GM12878 (cell line): ENCODE measurements at regions of chr3 and their contacts with region 1.

Region 1: DNA sequence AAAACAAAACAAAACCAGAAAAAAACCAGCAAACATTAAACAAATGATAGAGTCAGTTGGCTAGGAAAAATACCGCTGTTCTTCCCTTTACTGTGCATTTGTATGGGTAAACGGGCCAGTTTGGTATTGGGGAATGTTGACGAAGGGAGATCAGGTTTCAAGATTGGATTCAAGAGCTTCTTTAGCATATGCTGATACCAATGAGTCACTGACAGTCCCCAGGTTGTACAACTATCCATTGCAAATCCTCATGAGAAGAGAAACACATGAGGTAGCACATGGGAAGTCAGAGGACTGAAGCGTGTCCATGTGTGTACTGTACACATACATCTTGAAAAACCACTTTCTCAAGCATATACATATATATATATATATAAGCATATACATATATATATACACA is 25.6 kb downstream of the TIGIT start:
- DNase-seq: no peak
- ATAC-seq: no peak
- H3K4me3 ChIP-seq: no peak overlapping the region
- H3K27ac ChIP-seq: no peak overlapping the region
- H3K4me1 ChIP-seq: peaks cover 10% of the 10 kb centered on the region
- H3K27me3 ChIP-seq: no peaks in the 10 kb centered on the region
- CTCF ChIP-seq: no peak
- EP300 ChIP-seq: no peak
- POLR2A ChIP-seq: no peak
- RAD21 ChIP-seq: no peak

Region 2: GRCh38 chr3:114213627-114214541 is 105.6 kb before region 1 on chr3:
- CTCF ChIA-PET with region 1: no interaction called
- POLR2A ChIA-PET with region 1: no interaction called
- RAD21 ChIA-PET with region 1: interaction called, 29 read pairs
- SMC1A ChIA-PET with region 1: interaction called, 3 read pairs
- in situ Hi-C with region 1: no loop called
- intact Hi-C with region 1: no loop called
- DNase-seq: peak; percentile 84
- ATAC-seq: peak; percentile 91
- H3K4me3 ChIP-seq: peak overlapping the region; percentile 63
- H3K27ac ChIP-seq: peak overlapping the region; percentile 88
- H3K4me1 ChIP-seq: peaks cover 20% of the 10 kb centered on the region
- H3K27me3 ChIP-seq: no peaks in the 10 kb centered on the region; a peak in 1 of 4 replicates
- CTCF ChIP-seq: no peak
- EP300 ChIP-seq: peak; percentile 86 to 91
- POLR2A ChIP-seq: peak; percentile 74
- RAD21 ChIP-seq: no peak

Region 3: GRCh38 chr3:114299421-114299820 is 20.0 kb before region 1 on chr3:
- CTCF ChIA-PET with region 1: interaction called, 45 read pairs
- POLR2A ChIA-PET with region 1: interaction called, 3 read pairs
- RAD21 ChIA-PET with region 1: interaction called, 80 read pairs
- SMC1A ChIA-PET with region 1: interaction called, 50 read pairs
- in situ Hi-C with region 1: no loop called
- intact Hi-C with region 1: no loop called
- DNase-seq: no peak
- ATAC-seq: peak; percentile 67
- H3K4me3 ChIP-seq: no peak overlapping the region
- H3K27ac ChIP-seq: no peak overlapping the region
- H3K4me1 ChIP-seq: peaks cover 16% of the 10 kb centered on the region
- H3K27me3 ChIP-seq: no peaks in the 10 kb centered on the region
- CTCF ChIP-seq: peak; percentile 19 to 33 (median 22); a peak in 2 of 6 replicates
- EP300 ChIP-seq: no peak
- POLR2A ChIP-seq: no peak
- RAD21 ChIP-seq: no peak

Region 4: DNA sequence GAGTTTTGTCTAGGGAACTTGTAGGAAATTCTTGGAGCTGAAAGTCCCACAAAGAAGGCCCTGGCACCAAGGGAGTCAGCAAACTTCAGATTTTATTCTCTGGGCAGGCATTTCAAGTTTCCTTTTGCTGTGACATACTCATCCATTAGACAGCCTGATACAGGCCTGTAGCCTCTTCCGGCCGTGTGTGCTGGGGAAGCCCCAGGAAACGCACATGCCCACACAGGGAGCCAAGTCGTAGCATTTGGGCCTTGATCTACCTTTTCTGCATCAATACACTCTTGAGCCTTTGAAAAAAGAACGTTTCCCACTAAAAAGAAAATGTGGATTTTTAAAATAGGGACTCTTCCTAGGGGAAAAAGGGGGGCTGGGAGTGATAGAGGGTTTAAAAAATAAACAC is 10.6 kb before region 1 on chr3:
- CTCF ChIA-PET with region 1: interaction called, 35 read pairs
- POLR2A ChIA-PET with region 1: interaction called, 26 read pairs
- RAD21 ChIA-PET with region 1: interaction called, 34 read pairs
- SMC1A ChIA-PET with region 1: interaction called, 57 read pairs
- in situ Hi-C with region 1: no loop called
- intact Hi-C with region 1: no loop called
- DNase-seq: no peak
- ATAC-seq: peak; percentile 97
- H3K4me3 ChIP-seq: no peak overlapping the region
- H3K27ac ChIP-seq: peak overlapping the region; percentile 57
- H3K4me1 ChIP-seq: peaks cover 32% of the 10 kb centered on the region
- H3K27me3 ChIP-seq: no peaks in the 10 kb centered on the region
- CTCF ChIP-seq: no peak
- EP300 ChIP-seq: no peak
- POLR2A ChIP-seq: 0 out of 2 replicates have a peak, but pooled peaks have one; percentile 44
- RAD21 ChIP-seq: no peak

Region 5: DNA sequence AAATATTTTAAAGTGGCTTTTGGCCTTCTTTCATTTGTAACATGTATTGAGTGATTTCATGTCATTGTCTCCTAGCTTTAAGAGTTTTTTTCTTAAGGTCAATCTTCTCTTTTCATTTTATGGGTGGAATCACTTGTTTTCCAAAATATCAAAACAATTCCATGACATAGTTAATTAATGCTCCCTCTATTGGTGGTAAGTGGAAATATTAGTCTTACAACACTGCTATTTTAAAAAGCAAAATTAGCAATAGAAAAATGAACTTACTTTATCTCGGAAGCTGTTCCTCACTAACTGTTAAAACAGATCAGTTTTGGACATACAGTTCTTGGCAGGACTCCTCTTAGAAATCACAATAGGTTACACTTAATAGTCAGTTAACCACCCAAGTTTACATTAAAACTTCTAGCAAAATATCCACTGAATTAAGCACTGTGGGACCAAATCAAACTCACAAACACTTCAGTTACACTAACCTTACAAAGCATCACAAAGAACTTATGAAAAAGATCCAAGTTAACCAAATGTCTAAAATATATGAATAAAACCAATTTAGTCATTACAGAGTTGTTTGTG is 16.8 kb after region 1 on chr3:
- CTCF ChIA-PET with region 1: interaction called, 27 read pairs
- POLR2A ChIA-PET with region 1: interaction called, 5 read pairs
- RAD21 ChIA-PET with region 1: interaction called, 8 read pairs
- SMC1A ChIA-PET with region 1: interaction called, 21 read pairs
- in situ Hi-C with region 1: no loop called
- intact Hi-C with region 1: no loop called
- DNase-seq: no peak
- ATAC-seq: no peak
- H3K4me3 ChIP-seq: no peak overlapping the region
- H3K27ac ChIP-seq: no peak overlapping the region
- H3K4me1 ChIP-seq: peaks cover 14% of the 10 kb centered on the region; the same call in 1 of the 2 replicates
- H3K27me3 ChIP-seq: no peaks in the 10 kb centered on the region
- CTCF ChIP-seq: peak; percentile 19 to 33 (median 30); a peak in 4 of 6 replicates
- EP300 ChIP-seq: no peak
- POLR2A ChIP-seq: no peak
- RAD21 ChIP-seq: 0 out of 2 replicates have a peak, but pooled peaks have one; percentile 11

Region 6: GRCh38 chr3:114362815-114363214 is 43.4 kb after region 1 on chr3:
- CTCF ChIA-PET with region 1: interaction called, 3 read pairs
- POLR2A ChIA-PET with region 1: no interaction called
- RAD21 ChIA-PET with region 1: interaction called, 4 read pairs
- SMC1A ChIA-PET with region 1: interaction called, 16 read pairs
- in situ Hi-C with region 1: no loop called
- intact Hi-C with region 1: no loop called
- DNase-seq: no peak
- ATAC-seq: peak; percentile 87
- H3K4me3 ChIP-seq: no peak overlapping the region
- H3K27ac ChIP-seq: no peak overlapping the region
- H3K4me1 ChIP-seq: no peaks in the 10 kb centered on the region
- H3K27me3 ChIP-seq: no peaks in the 10 kb centered on the region
- CTCF ChIP-seq: peak in 2 of 3 experiments; percentile 37 to 51; a peak in 4 of 6 replicates
- EP300 ChIP-seq: no peak
- POLR2A ChIP-seq: no peak
- RAD21 ChIP-seq: peak; percentile 57